Endothelial cell of umbilical vein (primary cell): ENCODE measurements at regions of chr7 and their contacts with region 1.

Region 1: GRCh38 chr7:29652556-29652955 is 88.9 kb downstream of the PRR15 start:
- DNase-seq: no peak
- H3K4me3 ChIP-seq: no peak overlapping the region
- H3K27ac ChIP-seq: no peak overlapping the region
- H3K4me1 ChIP-seq: no peaks in the 10 kb centered on the region
- H3K27me3 ChIP-seq: no peaks in the 10 kb centered on the region
- CTCF ChIP-seq: no peak
- POLR2A ChIP-seq: no peak

Region 2: DNA sequence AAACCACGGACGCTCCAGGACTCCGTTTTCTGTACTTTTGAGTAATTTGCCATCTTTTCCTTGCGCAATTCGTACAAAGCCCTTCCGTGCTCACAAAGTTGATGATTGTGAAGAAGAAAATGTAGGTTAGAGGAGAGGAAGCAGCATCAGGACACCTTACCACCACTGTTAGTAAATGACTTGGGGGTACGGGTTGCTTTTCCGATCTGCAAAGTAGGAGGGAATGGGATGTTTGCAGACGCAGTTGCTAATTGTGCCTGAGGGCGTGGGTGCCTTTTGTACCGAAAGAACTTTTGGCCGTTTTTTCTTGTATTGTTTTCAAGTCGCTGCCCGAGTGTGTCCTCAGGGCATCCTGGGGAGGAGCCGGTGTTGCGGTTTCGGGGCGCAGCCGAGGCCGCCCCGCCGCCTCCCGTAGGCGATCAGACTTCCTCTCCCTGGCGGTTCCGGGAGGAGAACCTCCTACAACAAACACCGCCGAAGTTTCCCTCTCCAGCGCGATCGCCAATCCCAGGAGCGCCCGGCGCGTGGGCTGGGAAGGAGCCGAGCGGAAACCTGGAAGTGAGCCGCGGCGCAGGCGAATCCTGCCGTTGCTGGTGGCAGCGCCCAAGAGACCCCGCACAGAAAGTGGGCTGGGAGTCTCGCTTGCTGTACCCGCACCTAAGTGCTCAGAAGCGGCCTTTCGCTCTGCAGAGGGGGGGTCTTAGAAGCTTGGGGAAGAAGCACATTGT is 87.9 kb before region 1 on chr7:
- CTCF ChIA-PET with region 1: no interaction called
- POLR2A ChIA-PET with region 1: no interaction called
- dilution Hi-C with region 1: no loop called
- intact Hi-C with region 1: no loop called
- DNase-seq: peak; percentile 69
- H3K4me3 ChIP-seq: peak overlapping the region; percentile 56 to 92 (median 69)
- H3K27ac ChIP-seq: no peak overlapping the region
- H3K4me1 ChIP-seq: peaks cover 29% of the 10 kb centered on the region
- H3K27me3 ChIP-seq: peaks cover 0 to 13% of the 10 kb centered on the region in 2 experiments
- CTCF ChIP-seq: no peak
- POLR2A ChIP-seq: no peak

Region 3: GRCh38 chr7:29843093-29843492 is 190.5 kb after region 1 on chr7:
- CTCF ChIA-PET with region 1: no interaction called
- POLR2A ChIA-PET with region 1: no interaction called
- dilution Hi-C with region 1: no loop called
- intact Hi-C with region 1: loop called (anchors 10 kb)
- DNase-seq: no peak
- H3K4me3 ChIP-seq: no peak overlapping the region
- H3K27ac ChIP-seq: no peak overlapping the region
- H3K4me1 ChIP-seq: no peaks in the 10 kb centered on the region
- H3K27me3 ChIP-seq: peaks cover 12 to 26% of the 10 kb centered on the region in 2 experiments
- CTCF ChIP-seq: no peak
- POLR2A ChIP-seq: no peak